ENCODE measurements at regions of chr15 and their contacts with region 1.

Region 1: DNA sequence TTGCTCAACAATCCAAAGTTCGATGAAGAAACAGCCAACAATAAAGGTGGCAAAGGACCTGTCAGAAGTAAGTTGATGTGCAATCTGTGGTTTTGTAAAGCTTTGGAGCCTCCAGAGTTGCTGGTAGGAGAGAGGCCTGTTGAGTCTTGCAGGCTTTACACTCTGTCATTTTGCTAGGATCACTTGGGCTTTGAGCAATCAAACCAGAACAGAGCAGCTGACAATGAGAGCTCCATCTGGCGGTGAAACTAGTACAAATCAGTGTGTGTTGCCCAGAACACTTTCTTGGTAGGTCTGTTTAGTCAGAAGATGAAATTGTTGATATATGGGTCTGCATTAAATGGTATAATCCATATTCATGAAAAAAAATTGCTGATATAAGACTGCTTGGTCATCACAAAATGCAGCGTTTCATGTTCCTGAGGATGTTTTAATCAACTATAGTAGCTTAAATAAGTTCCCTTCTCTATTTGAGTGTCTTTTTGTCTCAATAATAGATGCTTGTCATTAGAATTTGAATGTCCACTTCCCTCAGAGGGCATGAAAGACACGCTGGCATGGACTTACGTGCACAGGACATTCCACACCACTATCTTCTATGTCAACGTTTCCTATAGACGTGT is 25.7 kb downstream of the TMOD2 start:
- DNase-seq: peak; percentile 71 to 87 (median 75)
- ATAC-seq: peak; percentile 98
- H3K4me3 ChIP-seq: no peak overlapping the region
- H3K27ac ChIP-seq: no peak overlapping the region
- H3K4me1 ChIP-seq: peaks cover 0 to 2% of the 10 kb centered on the region in 2 experiments; a peak in 1 of 5 replicates
- H3K27me3 ChIP-seq: no peaks in the 10 kb centered on the region
- CTCF ChIP-seq: peak; percentile 74 to 81 (median 80)
- EP300 ChIP-seq: no peak
- POLR2A ChIP-seq: no peak
- RAD21 ChIP-seq: peak; percentile 76 to 81

Region 2: GRCh38 chr15:51288108-51289065 is 488.7 kb before region 1 on chr15:
- CTCF ChIA-PET with region 1: no interaction called
- POLR2A ChIA-PET with region 1: no interaction called
- in situ Hi-C with region 1: no loop called
- intact Hi-C with region 1: no loop called
- DNase-seq: no peak
- ATAC-seq: no peak
- H3K4me3 ChIP-seq: no peak overlapping the region
- H3K27ac ChIP-seq: no peak overlapping the region
- H3K4me1 ChIP-seq: no peaks in the 10 kb centered on the region
- H3K27me3 ChIP-seq: peaks cover 6 to 50% of the 10 kb centered on the region in 2 experiments; a peak in 4 of 5 replicates
- CTCF ChIP-seq: no peak
- EP300 ChIP-seq: no peak
- POLR2A ChIP-seq: no peak
- RAD21 ChIP-seq: no peak

Region 3: GRCh38 chr15:51536965-51537574 is 240.0 kb before region 1 on chr15:
- CTCF ChIA-PET with region 1: interaction called, 3 read pairs
- POLR2A ChIA-PET with region 1: no interaction called
- in situ Hi-C with region 1: no loop called
- intact Hi-C with region 1: loop called (anchors 10 kb)
- DNase-seq: peak; percentile 21 to 50 (median 38)
- ATAC-seq: peak; percentile 75; the same call in 2 of the 3 replicates
- H3K4me3 ChIP-seq: no peak overlapping the region
- H3K27ac ChIP-seq: no peak overlapping the region
- H3K4me1 ChIP-seq: no peaks in the 10 kb centered on the region
- H3K27me3 ChIP-seq: no peaks in the 10 kb centered on the region
- CTCF ChIP-seq: peak; percentile 34 to 64 (median 56); a peak in 5 of 6 replicates
- EP300 ChIP-seq: no peak
- POLR2A ChIP-seq: no peak
- RAD21 ChIP-seq: peak; percentile 37 to 63

Region 4: DNA sequence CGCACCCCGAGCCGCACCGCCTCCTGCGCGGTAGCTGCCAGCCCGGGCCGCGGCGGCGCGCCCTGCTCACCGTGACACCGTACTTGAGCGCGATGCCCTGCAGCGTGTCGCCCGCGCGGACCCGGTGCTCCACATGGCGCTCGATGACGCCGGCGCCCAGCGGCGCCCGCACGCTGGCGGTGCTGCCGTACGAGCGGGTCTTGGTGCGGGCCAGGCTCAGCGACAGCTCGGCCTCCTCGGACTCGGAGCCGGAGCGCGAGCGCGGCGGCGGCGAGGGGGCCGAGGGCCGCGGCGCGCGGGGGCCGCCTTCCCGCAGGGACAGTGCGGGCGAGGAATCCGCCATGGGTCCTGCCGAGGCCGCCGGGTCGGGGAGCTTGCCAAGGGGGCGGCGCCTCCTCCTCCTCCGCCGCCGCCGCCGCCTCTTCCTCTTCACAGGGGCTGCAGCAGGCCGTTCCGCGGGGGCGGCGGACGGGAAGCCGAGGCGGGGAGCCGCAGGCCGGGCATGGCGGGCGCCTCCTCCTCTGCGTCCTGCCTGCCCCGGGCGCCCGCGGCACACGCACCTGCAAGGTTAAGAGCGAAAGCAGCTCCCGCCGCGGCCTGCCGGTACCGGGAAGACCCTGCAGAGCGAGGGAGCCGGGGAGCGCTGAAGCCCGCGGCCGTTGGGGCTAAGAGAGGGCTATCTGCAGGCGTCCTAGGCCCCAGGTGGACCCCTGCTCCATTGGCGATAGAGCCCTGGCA is 39.6 kb before region 1 on chr15 and contains the start of gene LYSMD2:
- CTCF ChIA-PET with region 1: no interaction called
- POLR2A ChIA-PET with region 1: interaction called, 4 read pairs
- in situ Hi-C with region 1: no loop called
- intact Hi-C with region 1: loop called (anchors 5 kb)
- DNase-seq: peak; percentile 73 to 81 (median 76)
- ATAC-seq: peak; percentile 76
- H3K4me3 ChIP-seq: peak within 1 kb of the TSS; percentile 64
- H3K27ac ChIP-seq: peak within 1 kb of the TSS; percentile 63
- H3K4me1 ChIP-seq: peaks cover 21 to 41% of the 10 kb centered on the region in 2 experiments
- H3K27me3 ChIP-seq: no peaks in the 10 kb centered on the region
- CTCF ChIP-seq: no peak
- EP300 ChIP-seq: no peak
- POLR2A ChIP-seq: no peak
- RAD21 ChIP-seq: no peak
- polyA plus RNA-seq, gene LYSMD2: 4.3 to 4.8 TPM

Region 5: DNA sequence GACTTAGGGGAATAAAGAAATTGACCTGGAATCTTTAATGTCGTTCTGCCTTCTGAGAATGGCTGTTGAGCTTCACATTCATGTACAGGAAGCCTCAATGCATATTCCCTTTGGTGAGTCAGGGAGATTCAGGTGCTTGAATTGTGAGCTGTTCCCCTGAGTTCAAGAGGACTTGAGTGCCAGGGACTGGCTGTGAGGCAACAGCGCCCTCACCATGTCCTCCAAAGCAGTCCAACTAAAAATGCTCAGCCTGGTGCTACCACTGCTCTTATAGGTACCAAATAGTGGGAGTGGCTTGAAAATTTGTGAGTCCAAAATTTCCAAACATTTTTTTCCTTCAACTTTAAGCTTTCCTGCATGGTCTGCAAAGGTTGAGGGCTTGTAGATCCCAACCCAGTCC is 140.4 kb after region 1 on chr15:
- CTCF ChIA-PET with region 1: no interaction called
- POLR2A ChIA-PET with region 1: no interaction called
- in situ Hi-C with region 1: no loop called
- intact Hi-C with region 1: loop called (anchors 1 kb)
- DNase-seq: peak; percentile 17 to 59 (median 30)
- ATAC-seq: peak; percentile 96
- H3K4me3 ChIP-seq: no peak overlapping the region
- H3K27ac ChIP-seq: no peak overlapping the region
- H3K4me1 ChIP-seq: no peaks in the 10 kb centered on the region
- H3K27me3 ChIP-seq: no peaks in the 10 kb centered on the region
- CTCF ChIP-seq: peak; percentile 65 to 70 (median 70)
- EP300 ChIP-seq: no peak
- POLR2A ChIP-seq: no peak
- RAD21 ChIP-seq: peak in 1 of 2 experiments; percentile 69; a peak in 3 of 4 replicates

Measured in K562 (cell line).